PC-9 (cell line): ENCODE measurements at regions of chr9 and their contacts with region 1.

Region 1: GRCh38 chr9:78428640-78429039 is 131.7 kb downstream of the PSAT1 start:
- DNase-seq: no peak
- H3K4me3 ChIP-seq: no peak overlapping the region
- H3K27ac ChIP-seq: no peak overlapping the region
- H3K4me1 ChIP-seq: no peaks in the 10 kb centered on the region
- H3K27me3 ChIP-seq: peaks cover 3% of the 10 kb centered on the region; the same call in 1 of the 2 replicates
- CTCF ChIP-seq: no peak

Region 2: DNA sequence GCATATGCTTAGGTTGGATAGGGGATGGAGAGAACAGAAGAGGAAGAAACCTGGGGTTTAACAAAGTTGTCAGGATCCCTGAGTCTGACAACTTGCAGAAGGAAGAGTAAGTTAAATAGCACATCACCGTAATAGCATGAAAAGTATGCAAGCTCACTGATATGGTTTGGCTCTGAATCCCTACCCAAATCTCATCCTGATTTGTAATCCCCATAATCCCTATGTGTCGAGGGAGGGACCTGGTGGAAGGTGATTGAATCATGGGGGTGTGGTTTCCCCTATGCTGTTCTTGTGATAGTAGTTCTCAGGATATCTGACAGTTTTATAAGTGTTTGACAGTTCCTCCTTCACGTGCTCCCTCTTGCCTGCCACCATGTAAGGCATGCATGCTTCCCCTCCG is 61.6 kb after region 1 on chr9:
- CTCF ChIA-PET with region 1: no interaction called
- POLR2A ChIA-PET with region 1: no interaction called
- intact Hi-C with region 1: loop called (anchors 2 kb)
- DNase-seq: no peak
- H3K4me3 ChIP-seq: no peak overlapping the region
- H3K27ac ChIP-seq: no peak overlapping the region
- H3K4me1 ChIP-seq: no peaks in the 10 kb centered on the region
- H3K27me3 ChIP-seq: peaks cover 7% of the 10 kb centered on the region; the same call in 1 of the 2 replicates
- CTCF ChIP-seq: no peak